Vagina (tissue), 2 donors: ENCODE measurements at regions of chr1 and their contacts with region 1.

Region 1: GRCh38 chr1:181324797-181325616 is 158.3 kb upstream of the CACNA1E start:
- DNase-seq: peak; percentile 61 to 77
- H3K4me3 ChIP-seq: no peak overlapping the region
- H3K27ac ChIP-seq: no peak overlapping the region
- H3K4me1 ChIP-seq: no peaks in the 10 kb centered on the region
- H3K27me3 ChIP-seq: no peaks in the 10 kb centered on the region
- CTCF ChIP-seq: no peak
- POLR2A ChIP-seq: no peak

Region 2: GRCh38 chr1:181295215-181295614 is 29.8 kb before region 1 on chr1:
- intact Hi-C with region 1: loop called (anchors 2 kb)
- DNase-seq: no peak
- H3K4me3 ChIP-seq: no peak overlapping the region
- H3K27ac ChIP-seq: no peak overlapping the region
- H3K4me1 ChIP-seq: no peaks in the 10 kb centered on the region
- H3K27me3 ChIP-seq: no peaks in the 10 kb centered on the region
- CTCF ChIP-seq: no peak
- POLR2A ChIP-seq: no peak